Activated B cell treated with CpG ODN at 0.5 μM for 24 hours (primary cell): ENCODE measurements at regions of chr7 and their contacts with region 1.

Region 1: GRCh38 chr7:18402488-18403183 is 92.9 kb upstream of the HDAC9 start:
- DNase-seq: no peak
- ATAC-seq: no peak
- H3K4me3 Mint-ChIP-seq: peak overlapping the region; percentile 32
- H3K27ac Mint-ChIP-seq: peak overlapping the region; percentile 71
- H3K4me1 Mint-ChIP-seq: peaks cover 60% of the 10 kb centered on the region
- H3K27me3 Mint-ChIP-seq: no peaks in the 10 kb centered on the region
- CTCF ChIP-seq: no peak

Region 2: GRCh38 chr7:18413447-18413846 is 10.8 kb after region 1 on chr7:
- CTCF ChIA-PET with region 1: no interaction called
- POLR2A ChIA-PET with region 1: no interaction called
- intact Hi-C with region 1: loop called (anchors 2 kb)
- DNase-seq: no peak
- ATAC-seq: no peak
- H3K4me3 Mint-ChIP-seq: no peak overlapping the region
- H3K27ac Mint-ChIP-seq: no peak overlapping the region
- H3K4me1 Mint-ChIP-seq: no peaks in the 10 kb centered on the region
- H3K27me3 Mint-ChIP-seq: no peaks in the 10 kb centered on the region
- CTCF ChIP-seq: no peak

Region 3: GRCh38 chr7:18421297-18422002 is 18.8 kb after region 1 on chr7:
- CTCF ChIA-PET with region 1: no interaction called
- POLR2A ChIA-PET with region 1: no interaction called
- intact Hi-C with region 1: loop called (anchors 2 kb)
- DNase-seq: no peak
- ATAC-seq: peak; percentile 31
- H3K4me3 Mint-ChIP-seq: no peak overlapping the region
- H3K27ac Mint-ChIP-seq: no peak overlapping the region
- H3K4me1 Mint-ChIP-seq: peaks cover 18% of the 10 kb centered on the region
- H3K27me3 Mint-ChIP-seq: no peaks in the 10 kb centered on the region
- CTCF ChIP-seq: no peak